GM10248 (cell line): ENCODE measurements at regions of chr14 and their contacts with region 1.

Region 1: GRCh38 chr14:65502676-65503124 is 90.2 kb downstream of the FUT8 start:
- DNase-seq: no peak
- CTCF ChIP-seq: no peak

Region 2: GRCh38 chr14:65170768-65171507 is 331.8 kb before region 1 on chr14:
- CTCF ChIA-PET with region 1: no interaction called
- POLR2A ChIA-PET with region 1: interaction called, 13 read pairs
- DNase-seq: no peak
- CTCF ChIP-seq: peak; percentile 56

Region 3: DNA sequence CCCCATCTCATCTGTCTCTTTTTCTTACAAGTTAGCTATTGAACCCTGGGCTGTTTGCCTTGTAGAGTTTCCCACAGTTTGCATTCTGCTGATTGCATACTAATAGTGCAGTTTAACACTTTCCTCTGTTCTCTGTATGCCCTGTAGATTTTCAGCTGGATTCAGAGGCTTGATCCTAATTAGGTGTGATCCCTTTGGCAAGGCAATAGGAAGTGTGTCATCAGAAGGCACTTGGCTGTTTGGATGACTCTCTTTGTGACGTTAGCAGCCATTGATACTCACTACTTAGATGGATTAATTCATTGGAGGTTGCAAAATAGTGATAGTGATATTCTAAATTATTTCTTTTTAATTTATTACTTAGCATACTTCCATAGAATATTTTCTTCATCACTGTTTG is 56.5 kb before region 1 on chr14:
- CTCF ChIA-PET with region 1: no interaction called
- POLR2A ChIA-PET with region 1: no interaction called
- DNase-seq: no peak
- CTCF ChIP-seq: no peak

Region 4: DNA sequence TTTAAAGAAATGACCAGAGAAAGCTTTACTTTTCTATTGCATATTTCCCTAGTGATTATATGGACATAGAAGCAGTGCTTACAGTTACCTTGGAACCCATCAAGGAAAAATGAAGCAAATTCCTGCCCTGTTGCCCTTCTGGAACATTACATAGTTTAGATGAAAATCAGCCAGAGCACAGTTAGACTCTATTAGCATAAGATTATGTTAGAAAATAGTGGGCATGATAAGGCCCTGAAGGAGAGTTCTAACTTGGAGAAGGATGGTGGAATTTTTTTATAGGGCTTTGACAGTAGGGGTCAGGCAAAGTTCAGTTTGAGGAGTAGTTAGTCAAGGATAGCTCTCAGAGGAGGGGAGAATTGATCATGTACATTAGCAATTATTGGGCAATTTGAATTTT is 15.8 kb before region 1 on chr14:
- CTCF ChIA-PET with region 1: interaction called, 69 read pairs
- POLR2A ChIA-PET with region 1: interaction called, 3 read pairs
- DNase-seq: no peak
- CTCF ChIP-seq: peak; percentile 2

Region 5: DNA sequence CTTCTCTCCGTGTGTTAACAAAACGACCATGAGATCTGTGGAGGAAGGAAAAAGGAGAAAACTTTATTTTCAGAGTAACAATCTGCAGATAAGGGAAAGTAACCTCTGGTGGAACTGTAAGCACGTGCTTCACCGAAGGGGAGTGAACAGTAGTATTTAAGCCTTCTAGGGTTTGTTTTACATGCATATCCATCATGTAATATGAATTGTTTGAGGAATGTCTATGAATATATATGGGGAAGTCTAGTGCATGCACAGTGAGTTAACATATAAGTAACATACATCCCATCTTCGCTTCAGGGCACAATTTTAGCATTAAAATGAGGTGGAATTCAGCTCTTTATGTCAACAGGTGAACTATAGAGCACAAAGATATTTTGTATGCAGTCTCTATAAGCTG is 11.0 kb after region 1 on chr14:
- CTCF ChIA-PET with region 1: interaction called, 10 read pairs
- POLR2A ChIA-PET with region 1: no interaction called
- DNase-seq: no peak
- CTCF ChIP-seq: no peak